Ascending aorta (tissue), 2 donors: ENCODE measurements at regions of chr1 and their contacts with region 1.

Region 1: DNA sequence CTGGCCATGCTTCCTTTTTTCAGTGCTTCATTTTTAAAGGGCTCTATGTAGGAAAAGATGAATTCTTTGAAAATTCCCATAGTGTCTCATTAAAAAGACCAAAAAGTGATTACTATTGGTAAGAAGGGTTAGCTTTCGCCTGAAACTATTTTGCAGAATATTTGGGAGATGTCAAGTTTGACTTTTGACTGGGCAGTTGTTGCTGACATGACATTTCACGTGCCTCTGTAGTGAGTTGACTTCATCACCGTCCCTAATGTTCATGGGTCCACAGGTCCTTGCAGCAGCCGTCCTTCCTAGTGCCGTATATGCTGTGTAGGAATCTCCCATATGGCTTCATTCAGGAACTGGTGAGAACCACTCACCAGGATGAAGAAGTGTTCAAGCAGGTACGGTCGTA is 88.7 kb upstream of the KIF1B start:
- DNase-seq: no peak
- H3K4me3 ChIP-seq: no peak overlapping the region
- H3K27ac ChIP-seq: peak overlapping the region; percentile 52 to 74
- H3K4me1 ChIP-seq: peaks cover 7 to 27% of the 10 kb centered on the region in 2 donors
- H3K27me3 ChIP-seq: no peaks in the 10 kb centered on the region
- CTCF ChIP-seq: no peak

Region 2: GRCh38 chr1:10065344-10065685 is 56.4 kb before region 1 on chr1:
- intact Hi-C with region 1: loop called (anchors 5 kb)
- DNase-seq: no peak
- H3K4me3 ChIP-seq: no peak overlapping the region
- H3K27ac ChIP-seq: peak overlapping the region; percentile 88 to 91
- H3K4me1 ChIP-seq: peaks cover 3 to 39% of the 10 kb centered on the region in 2 donors
- H3K27me3 ChIP-seq: no peaks in the 10 kb centered on the region
- CTCF ChIP-seq: no peak

Region 3: DNA sequence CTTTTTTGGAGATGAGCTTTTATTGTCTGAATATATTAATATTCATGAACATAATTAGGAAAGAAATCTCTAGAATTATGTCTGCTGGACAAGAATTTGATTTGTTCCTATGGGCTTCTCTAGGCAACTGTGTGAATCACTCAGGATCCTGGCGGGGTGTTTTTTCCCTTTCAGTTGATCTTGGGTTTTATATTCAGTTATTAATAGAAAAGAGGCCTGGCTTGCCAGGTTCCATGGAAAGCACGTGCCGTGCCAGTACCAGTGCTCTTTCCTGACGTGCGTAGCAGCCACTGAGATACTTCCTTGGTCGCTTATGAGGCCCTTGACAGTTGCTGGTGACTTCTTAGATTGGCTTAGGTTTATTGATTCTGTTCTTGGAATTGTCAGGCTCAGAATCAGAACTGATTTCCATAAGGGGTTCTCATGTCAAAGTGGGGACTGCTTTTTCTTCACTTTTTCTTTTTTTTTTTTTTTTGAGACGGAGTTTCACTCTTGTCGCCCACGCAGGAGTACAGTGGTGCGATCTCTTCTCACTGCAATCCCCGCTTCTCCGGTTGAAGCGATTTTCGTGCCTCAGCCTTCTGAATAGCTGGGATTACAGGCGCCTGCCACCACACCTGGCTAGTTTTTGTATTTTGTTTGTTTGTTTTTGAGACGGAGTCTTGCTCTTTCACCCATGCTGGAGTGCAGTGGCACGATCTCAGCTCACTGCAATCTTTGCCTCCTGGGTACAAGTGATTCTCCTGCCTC is 40.0 kb after region 1 on chr1:
- intact Hi-C with region 1: loop called (anchors 2 kb)
- DNase-seq: peak; percentile 29 to 90
- H3K4me3 ChIP-seq: no peak overlapping the region
- H3K27ac ChIP-seq: peak overlapping the region; percentile 80 to 84
- H3K4me1 ChIP-seq: peaks cover 0 to 18% of the 10 kb centered on the region in 2 donors
- H3K27me3 ChIP-seq: no peaks in the 10 kb centered on the region
- CTCF ChIP-seq: no peak

Region 4: GRCh38 chr1:10324627-10325026 is 202.9 kb after region 1 on chr1:
- intact Hi-C with region 1: no loop called
- DNase-seq: no peak
- H3K4me3 ChIP-seq: no peak overlapping the region
- H3K27ac ChIP-seq: no peak overlapping the region
- H3K4me1 ChIP-seq: no peaks in the 10 kb centered on the region
- H3K27me3 ChIP-seq: no peaks in the 10 kb centered on the region
- CTCF ChIP-seq: no peak